ENCODE measurements at regions of chr10 and their contacts with region 1.

Region 1: GRCh38 chr10:1084011-1084950 is 28.1 kb downstream of the WDR37 start:
- H3K4me3 Mint-ChIP-seq: no peak overlapping the region
- H3K27ac Mint-ChIP-seq: no peak overlapping the region
- H3K4me1 Mint-ChIP-seq: no peaks in the 10 kb centered on the region
- H3K27me3 Mint-ChIP-seq: no peaks in the 10 kb centered on the region

Region 2: DNA sequence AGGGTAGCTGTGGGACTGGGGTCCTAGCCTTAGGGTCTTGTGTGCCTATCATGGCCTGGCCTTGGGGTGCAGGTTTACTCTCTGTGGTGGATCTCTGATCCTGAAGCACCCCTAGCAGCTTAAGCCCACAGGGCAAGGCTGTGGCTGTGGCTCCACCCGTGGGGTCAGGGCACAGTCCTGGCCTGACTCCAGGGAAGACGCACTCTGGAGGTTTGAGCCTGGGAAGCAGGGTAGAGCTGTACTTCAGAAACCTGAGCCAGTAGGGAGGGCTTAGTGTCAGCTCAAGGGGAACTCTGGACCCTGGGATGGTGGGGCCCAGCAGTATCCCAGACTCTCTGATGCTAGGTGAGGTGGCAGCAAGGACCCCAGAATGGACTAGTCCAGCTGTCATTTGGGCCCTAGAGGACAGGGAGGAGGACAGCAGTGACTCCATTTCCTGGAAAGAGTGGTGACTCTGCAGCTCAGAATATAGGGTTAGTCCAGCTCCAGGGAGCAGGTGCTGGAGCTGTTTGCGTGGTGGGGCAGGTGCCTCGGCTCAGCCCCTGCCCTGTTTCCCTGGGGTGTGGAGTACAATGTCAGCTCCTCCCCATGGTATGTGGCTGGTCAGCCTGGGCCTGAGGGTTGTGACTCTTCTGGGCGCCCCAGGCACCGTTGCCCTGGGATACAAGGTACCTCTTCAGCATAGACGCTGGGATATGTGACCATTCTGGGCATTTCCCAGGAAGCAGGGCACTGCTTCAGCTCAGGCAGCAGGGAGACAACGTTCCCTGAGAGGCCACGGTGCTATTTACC is 80.2 kb before region 1 on chr10:
- intact Hi-C with region 1: loop called (anchors 5 kb)
- H3K4me3 Mint-ChIP-seq: no peak overlapping the region
- H3K27ac Mint-ChIP-seq: no peak overlapping the region
- H3K4me1 Mint-ChIP-seq: no peaks in the 10 kb centered on the region
- H3K27me3 Mint-ChIP-seq: no peaks in the 10 kb centered on the region

Region 3: GRCh38 chr10:1802413-1802812 is 718.1 kb after region 1 on chr10:
- intact Hi-C with region 1: no loop called
- H3K4me3 Mint-ChIP-seq: no peak overlapping the region
- H3K27ac Mint-ChIP-seq: no peak overlapping the region
- H3K4me1 Mint-ChIP-seq: no peaks in the 10 kb centered on the region
- H3K27me3 Mint-ChIP-seq: no peaks in the 10 kb centered on the region